Activated B cell treated with CpG ODN at 0.5 μM for 24 hours (primary cell): ENCODE measurements at regions of chr6 and their contacts with region 1.

Region 1: DNA sequence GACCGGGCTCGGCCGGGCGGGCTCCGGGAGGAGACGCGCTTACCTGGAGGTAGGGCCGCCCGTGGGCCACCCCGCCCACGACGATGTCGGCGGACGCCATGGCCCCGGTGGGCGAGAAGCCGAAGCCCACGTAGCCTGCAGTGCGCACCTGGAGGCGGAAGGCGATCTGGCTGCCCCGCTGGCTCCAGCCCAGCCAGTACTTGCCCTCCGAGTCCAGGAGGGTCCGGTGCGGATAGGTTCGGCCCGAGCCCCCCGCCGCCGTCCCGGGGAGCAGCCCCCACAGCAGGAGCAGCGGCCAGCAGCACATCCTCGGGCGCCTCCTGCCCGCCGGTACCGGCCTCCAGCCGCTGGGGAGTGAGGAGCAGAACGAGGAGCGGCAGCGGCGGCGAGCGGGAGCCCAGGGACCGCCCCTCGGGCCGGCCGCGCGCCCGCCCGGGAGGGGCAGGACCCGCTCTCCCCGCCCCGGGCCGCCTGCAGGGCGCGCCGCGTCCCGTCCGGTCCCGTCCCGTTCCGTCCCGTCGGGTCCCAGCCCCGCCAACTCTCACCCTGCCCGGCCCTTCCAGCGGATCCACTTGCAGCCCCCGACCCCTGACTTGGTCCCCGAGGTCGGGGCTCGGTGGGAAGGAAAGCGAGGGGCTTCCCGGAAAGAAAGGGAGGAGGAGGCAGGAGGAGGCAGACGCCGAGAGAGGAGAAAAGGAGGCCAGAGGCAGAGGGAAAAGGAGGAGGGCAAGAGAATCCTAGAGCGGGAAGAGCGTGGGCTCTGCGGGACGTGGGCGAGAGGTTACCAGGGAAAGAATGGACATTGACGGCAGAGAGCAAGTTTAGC is at the start of gene MOXD1:
- DNase-seq: peak; percentile 61
- ATAC-seq: peak; percentile 77
- H3K4me3 Mint-ChIP-seq: peak within 1 kb of the TSS; percentile 88
- H3K27ac Mint-ChIP-seq: peak within 1 kb of the TSS; percentile 42
- H3K4me1 Mint-ChIP-seq: peaks cover 31% of the 10 kb centered on the region
- H3K27me3 Mint-ChIP-seq: peaks cover 7% of the 10 kb centered on the region
- CTCF ChIP-seq: no peak
- total RNA-seq, gene MOXD1: 3.2 and 3.7 TPM in 2 replicates

Region 2: GRCh38 chr6:132041706-132042105 is 359.6 kb before region 1 on chr6:
- CTCF ChIA-PET with region 1: no interaction called
- POLR2A ChIA-PET with region 1: no interaction called
- intact Hi-C with region 1: no loop called
- DNase-seq: no peak
- ATAC-seq: no peak
- H3K4me3 Mint-ChIP-seq: no peak overlapping the region
- H3K27ac Mint-ChIP-seq: no peak overlapping the region
- H3K4me1 Mint-ChIP-seq: no peaks in the 10 kb centered on the region
- H3K27me3 Mint-ChIP-seq: no peaks in the 10 kb centered on the region
- CTCF ChIP-seq: no peak

Region 3: DNA sequence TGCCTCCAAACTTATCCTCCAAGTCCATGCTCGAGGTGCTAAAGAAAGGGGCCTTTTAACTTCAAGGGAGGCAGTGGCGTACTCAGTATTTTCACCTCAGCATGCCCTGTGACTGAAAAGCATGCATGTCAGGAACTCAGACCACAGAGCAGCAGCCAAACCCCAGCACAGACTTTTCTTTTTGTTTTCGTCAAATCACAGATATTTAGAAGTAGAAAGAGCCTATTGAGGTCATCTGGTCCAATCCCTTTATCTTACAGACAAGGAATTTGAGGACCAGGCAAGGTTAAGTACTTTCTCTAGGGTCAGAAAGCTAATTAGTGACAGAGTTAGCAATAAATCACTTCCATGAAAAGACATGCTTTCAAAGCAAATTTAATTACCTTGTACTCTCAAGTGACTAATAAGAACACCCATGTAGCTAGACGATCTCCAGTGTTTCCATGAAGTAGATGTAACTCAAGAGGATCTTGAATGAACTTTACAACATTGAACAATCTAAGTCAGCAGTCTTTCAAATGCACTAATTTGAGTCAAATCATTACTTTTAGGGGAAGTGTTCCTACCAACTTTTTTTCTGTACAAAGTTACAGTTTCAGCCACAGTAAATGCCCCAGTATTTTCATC is 35.9 kb before region 1 on chr6:
- CTCF ChIA-PET with region 1: no interaction called
- POLR2A ChIA-PET with region 1: no interaction called
- intact Hi-C with region 1: loop called (anchors 1 kb)
- DNase-seq: no peak
- ATAC-seq: peak; percentile 83
- H3K4me3 Mint-ChIP-seq: peak overlapping the region; percentile 44
- H3K27ac Mint-ChIP-seq: peak overlapping the region; percentile 82
- H3K4me1 Mint-ChIP-seq: peaks cover 61% of the 10 kb centered on the region
- H3K27me3 Mint-ChIP-seq: no peaks in the 10 kb centered on the region
- CTCF ChIP-seq: no peak

Region 4: DNA sequence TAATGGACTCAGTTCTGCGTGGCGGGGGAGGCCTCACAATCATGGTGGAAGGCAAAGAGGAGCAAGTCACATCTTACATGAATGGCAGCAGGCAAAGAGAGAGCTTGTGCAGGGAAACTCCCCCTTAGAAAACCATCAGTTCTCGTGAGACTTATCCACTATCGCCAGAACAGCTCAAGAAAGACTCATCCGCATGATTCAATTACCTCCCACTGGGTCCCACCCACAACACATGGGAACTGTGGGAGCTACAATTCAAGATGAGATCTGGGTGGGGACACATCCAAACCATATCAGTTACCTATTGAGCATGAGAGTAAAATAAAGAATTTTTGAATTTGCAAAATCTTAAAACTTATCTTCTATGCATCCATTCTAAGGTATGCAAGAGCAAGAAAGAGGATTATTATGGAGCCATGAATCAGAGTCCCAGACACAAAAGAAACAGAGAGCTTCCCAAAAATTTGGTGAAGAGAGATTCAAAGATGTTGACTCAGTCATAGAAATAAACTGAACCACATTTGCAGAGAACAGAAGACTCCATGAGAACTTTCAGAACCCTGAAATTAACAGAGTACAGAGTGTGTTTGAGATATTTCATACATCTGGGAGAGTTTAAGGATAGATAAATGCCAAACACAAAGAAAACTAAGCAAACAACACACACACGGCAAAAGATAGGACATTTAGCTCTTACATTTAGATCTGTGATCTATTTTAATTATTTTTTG is 17.1 kb after region 1 on chr6:
- CTCF ChIA-PET with region 1: no interaction called
- POLR2A ChIA-PET with region 1: no interaction called
- intact Hi-C with region 1: loop called (anchors 2 kb)
- DNase-seq: no peak
- ATAC-seq: no peak
- H3K4me3 Mint-ChIP-seq: no peak overlapping the region
- H3K27ac Mint-ChIP-seq: no peak overlapping the region
- H3K4me1 Mint-ChIP-seq: peaks cover 2% of the 10 kb centered on the region
- H3K27me3 Mint-ChIP-seq: peaks cover 7% of the 10 kb centered on the region
- CTCF ChIP-seq: no peak

Region 5: GRCh38 chr6:132443206-132443605 is 41.9 kb after region 1 on chr6:
- CTCF ChIA-PET with region 1: no interaction called
- POLR2A ChIA-PET with region 1: no interaction called
- intact Hi-C with region 1: loop called (anchors 5 kb)
- DNase-seq: no peak
- ATAC-seq: no peak
- H3K4me3 Mint-ChIP-seq: no peak overlapping the region
- H3K27ac Mint-ChIP-seq: no peak overlapping the region
- H3K4me1 Mint-ChIP-seq: peaks cover 6% of the 10 kb centered on the region
- H3K27me3 Mint-ChIP-seq: no peaks in the 10 kb centered on the region
- CTCF ChIP-seq: no peak

Region 6: GRCh38 chr6:132830334-132830751 is 429.0 kb after region 1 on chr6:
- CTCF ChIA-PET with region 1: no interaction called
- POLR2A ChIA-PET with region 1: no interaction called
- intact Hi-C with region 1: no loop called
- DNase-seq: no peak
- ATAC-seq: no peak
- H3K4me3 Mint-ChIP-seq: no peak overlapping the region
- H3K27ac Mint-ChIP-seq: no peak overlapping the region
- H3K4me1 Mint-ChIP-seq: no peaks in the 10 kb centered on the region
- H3K27me3 Mint-ChIP-seq: no peaks in the 10 kb centered on the region
- CTCF ChIP-seq: no peak